Tibial artery (tissue), 4 donors: ENCODE measurements at regions of chr5 and their contacts with region 1.

Region 1: DNA sequence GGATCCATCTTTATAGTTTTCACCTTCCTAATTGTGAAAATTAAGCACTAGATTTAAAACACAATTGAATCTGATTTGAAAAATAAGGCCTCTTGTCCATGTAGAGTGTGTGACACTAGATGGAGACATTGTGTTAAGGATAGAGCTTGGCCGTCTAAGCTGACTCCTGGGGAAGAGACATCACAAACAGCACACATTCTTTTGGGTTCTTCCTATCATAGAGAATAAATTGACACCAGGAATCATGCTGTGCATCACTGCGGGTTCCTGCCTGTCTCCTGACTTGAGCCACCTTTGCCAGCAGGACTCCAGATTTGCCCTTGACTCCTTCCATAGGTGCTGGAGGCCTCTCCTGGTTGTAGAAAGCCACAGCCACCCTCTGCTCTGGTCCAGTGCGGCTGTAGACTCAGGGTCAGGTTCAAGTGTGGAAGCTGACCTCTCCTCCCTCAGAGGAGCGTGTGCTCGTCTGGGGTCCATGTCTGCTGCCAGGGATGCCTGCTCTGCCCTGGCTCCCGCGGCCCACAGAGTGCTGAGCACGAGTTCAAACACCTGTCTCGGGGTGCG is 11.2 kb downstream of the ROPN1L start:
- DNase-seq: no peak
- H3K4me3 ChIP-seq: no peak overlapping the region
- H3K27ac ChIP-seq: no peak overlapping the region
- H3K4me1 ChIP-seq: peaks cover 0 to 15% (median 11%) of the 10 kb centered on the region in 4 donors
- H3K27me3 ChIP-seq: peaks cover 0 to 6% of the 10 kb centered on the region in 2 donors
- CTCF ChIP-seq: peak; percentile 71 to 80

Region 2: DNA sequence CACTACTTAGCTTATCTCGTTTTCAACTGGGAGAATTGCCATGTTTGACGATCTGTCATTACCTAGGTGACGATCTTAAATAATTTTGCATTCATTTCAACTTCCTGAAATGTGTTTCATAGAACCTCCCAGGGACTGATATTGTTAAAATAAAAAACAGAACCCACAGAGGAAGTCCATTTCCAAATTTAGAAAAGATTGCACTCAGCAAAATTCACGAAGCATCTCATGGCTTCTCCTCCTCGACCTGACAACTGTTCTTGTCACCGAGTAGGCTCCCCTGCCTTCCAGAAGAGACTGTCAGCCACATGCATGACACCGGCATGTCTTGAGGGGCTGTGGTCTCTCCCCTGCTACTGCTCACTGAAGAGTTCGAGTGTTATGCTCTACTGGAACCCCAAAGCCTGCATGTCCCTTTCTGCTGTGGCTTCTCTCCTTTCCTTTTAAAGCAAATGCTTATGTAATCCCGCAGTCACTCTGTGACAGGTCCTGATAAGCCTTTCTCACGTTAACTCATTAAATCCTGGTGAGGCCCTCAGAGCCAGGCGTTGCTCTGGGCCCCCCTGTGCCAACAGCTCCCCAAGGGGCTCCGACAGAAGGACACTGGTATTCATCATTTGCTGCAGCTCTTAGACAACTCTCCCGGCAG is 84.2 kb after region 1 on chr5:
- intact Hi-C with region 1: loop called (anchors 10 kb)
- DNase-seq: no peak
- H3K4me3 ChIP-seq: peak overlapping the region; percentile 14 to 36
- H3K27ac ChIP-seq: no peak overlapping the region
- H3K4me1 ChIP-seq: peaks cover 0 to 26% (median 10%) of the 10 kb centered on the region in 4 donors
- H3K27me3 ChIP-seq: peaks cover 0 to 17% of the 10 kb centered on the region in 2 donors
- CTCF ChIP-seq: no peak